GM12878 (cell line): ENCODE measurements at regions of chr1 and their contacts with region 1.

Region 1: GRCh38 chr1:18902523-18903290 is at the start of gene ALDH4A1:
- DNase-seq: peak; percentile 90
- ATAC-seq: peak; percentile 99
- H3K4me3 ChIP-seq: peak within 1 kb of the TSS; percentile 86
- H3K27ac ChIP-seq: peak within 1 kb of the TSS; percentile 91
- H3K4me1 ChIP-seq: peaks cover 10% of the 10 kb centered on the region; the same call in 1 of the 2 replicates
- H3K27me3 ChIP-seq: no peaks in the 10 kb centered on the region
- CTCF ChIP-seq: 0 out of 6 replicates have a peak, but pooled peaks of 1 of the 3 experiments have one; percentile 4
- EP300 ChIP-seq: no peak
- POLR2A ChIP-seq: peak; percentile 79
- RAD21 ChIP-seq: no peak
- polyA plus RNA-seq, gene ALDH4A1: 0.06 to 0.53 TPM

Region 2: GRCh38 chr1:18794051-18794450 is 108.7 kb before region 1 on chr1:
- CTCF ChIA-PET with region 1: no interaction called
- POLR2A ChIA-PET with region 1: no interaction called
- RAD21 ChIA-PET with region 1: no interaction called
- SMC1A ChIA-PET with region 1: no interaction called
- in situ Hi-C with region 1: no loop called
- intact Hi-C with region 1: no loop called
- DNase-seq: no peak
- ATAC-seq: no peak
- H3K4me3 ChIP-seq: no peak overlapping the region
- H3K27ac ChIP-seq: no peak overlapping the region
- H3K4me1 ChIP-seq: no peaks in the 10 kb centered on the region
- H3K27me3 ChIP-seq: peaks cover 0 to 4% of the 10 kb centered on the region in 2 experiments; a peak in 3 of 4 replicates
- CTCF ChIP-seq: no peak
- EP300 ChIP-seq: no peak
- POLR2A ChIP-seq: no peak
- RAD21 ChIP-seq: no peak

Region 3: GRCh38 chr1:18926315-18927081 is 23.8 kb after region 1 on chr1:
- CTCF ChIA-PET with region 1: interaction called, 29 read pairs
- POLR2A ChIA-PET with region 1: interaction called, 7 read pairs
- RAD21 ChIA-PET with region 1: interaction called, 10 read pairs
- SMC1A ChIA-PET with region 1: interaction called, 4 read pairs
- in situ Hi-C with region 1: no loop called
- intact Hi-C with region 1: no loop called
- DNase-seq: peak; percentile 80
- ATAC-seq: peak; percentile 90
- H3K4me3 ChIP-seq: peak overlapping the region; percentile 68
- H3K27ac ChIP-seq: peak overlapping the region; percentile 98
- H3K4me1 ChIP-seq: peaks cover 55% of the 10 kb centered on the region
- H3K27me3 ChIP-seq: no peaks in the 10 kb centered on the region
- CTCF ChIP-seq: peak in 1 of 3 experiments; percentile 5; a peak in 1 of 6 replicates
- EP300 ChIP-seq: 0 out of 4 replicates have a peak, but pooled peaks of 1 of the 2 experiments have one; percentile 37
- POLR2A ChIP-seq: peak; percentile 68
- RAD21 ChIP-seq: peak; percentile 28; the same call in 1 of the 2 replicates

Region 4: GRCh38 chr1:18956369-18957135 is 53.8 kb after region 1 on chr1 and contains the start of gene IFFO2:
- CTCF ChIA-PET with region 1: interaction called, 86 read pairs
- POLR2A ChIA-PET with region 1: interaction called, 6 read pairs
- RAD21 ChIA-PET with region 1: interaction called, 11 read pairs
- SMC1A ChIA-PET with region 1: interaction called, 3 read pairs
- in situ Hi-C with region 1: no loop called
- intact Hi-C with region 1: no loop called
- DNase-seq: peak; percentile 34
- ATAC-seq: peak; percentile 80
- H3K4me3 ChIP-seq: peak within 1 kb of the TSS; percentile 70
- H3K27ac ChIP-seq: peak within 1 kb of the TSS; percentile 8; the same call in 1 of the 2 replicates
- H3K4me1 ChIP-seq: peaks cover 41% of the 10 kb centered on the region
- H3K27me3 ChIP-seq: peaks cover 1 to 3% of the 10 kb centered on the region in 2 experiments; a peak in 3 of 4 replicates
- CTCF ChIP-seq: no peak
- EP300 ChIP-seq: no peak
- POLR2A ChIP-seq: peak; percentile 81
- RAD21 ChIP-seq: no peak
- polyA plus RNA-seq, gene IFFO2: 1.2 to 1.9 TPM

Region 5: GRCh38 chr1:19087737-19088594 is 185.3 kb after region 1 on chr1:
- CTCF ChIA-PET with region 1: interaction called, 22 read pairs
- POLR2A ChIA-PET with region 1: no interaction called
- RAD21 ChIA-PET with region 1: interaction called, 6 read pairs
- SMC1A ChIA-PET with region 1: interaction called, 6 read pairs
- in situ Hi-C with region 1: no loop called
- intact Hi-C with region 1: loop called (anchors 2 kb)
- DNase-seq: peak; percentile 19
- ATAC-seq: peak; percentile 90
- H3K4me3 ChIP-seq: 0 out of 2 replicates have a peak overlapping the region, but pooled peaks have one; percentile 6
- H3K27ac ChIP-seq: peak overlapping the region; percentile 75
- H3K4me1 ChIP-seq: peaks cover 26% of the 10 kb centered on the region
- H3K27me3 ChIP-seq: no peaks in the 10 kb centered on the region
- CTCF ChIP-seq: no peak
- EP300 ChIP-seq: no peak
- POLR2A ChIP-seq: peak; percentile 60
- RAD21 ChIP-seq: no peak

Region 6: GRCh38 chr1:19101244-19101643 is 198.5 kb after region 1 on chr1:
- CTCF ChIA-PET with region 1: interaction called, 18 read pairs
- POLR2A ChIA-PET with region 1: no interaction called
- RAD21 ChIA-PET with region 1: no interaction called
- SMC1A ChIA-PET with region 1: interaction called, 4 read pairs
- in situ Hi-C with region 1: loop called (anchors 5 kb)
- intact Hi-C with region 1: no loop called
- DNase-seq: no peak
- ATAC-seq: no peak
- H3K4me3 ChIP-seq: no peak overlapping the region
- H3K27ac ChIP-seq: no peak overlapping the region
- H3K4me1 ChIP-seq: no peaks in the 10 kb centered on the region
- H3K27me3 ChIP-seq: no peaks in the 10 kb centered on the region
- CTCF ChIP-seq: no peak
- EP300 ChIP-seq: no peak
- POLR2A ChIP-seq: no peak
- RAD21 ChIP-seq: no peak

Region 7: DNA sequence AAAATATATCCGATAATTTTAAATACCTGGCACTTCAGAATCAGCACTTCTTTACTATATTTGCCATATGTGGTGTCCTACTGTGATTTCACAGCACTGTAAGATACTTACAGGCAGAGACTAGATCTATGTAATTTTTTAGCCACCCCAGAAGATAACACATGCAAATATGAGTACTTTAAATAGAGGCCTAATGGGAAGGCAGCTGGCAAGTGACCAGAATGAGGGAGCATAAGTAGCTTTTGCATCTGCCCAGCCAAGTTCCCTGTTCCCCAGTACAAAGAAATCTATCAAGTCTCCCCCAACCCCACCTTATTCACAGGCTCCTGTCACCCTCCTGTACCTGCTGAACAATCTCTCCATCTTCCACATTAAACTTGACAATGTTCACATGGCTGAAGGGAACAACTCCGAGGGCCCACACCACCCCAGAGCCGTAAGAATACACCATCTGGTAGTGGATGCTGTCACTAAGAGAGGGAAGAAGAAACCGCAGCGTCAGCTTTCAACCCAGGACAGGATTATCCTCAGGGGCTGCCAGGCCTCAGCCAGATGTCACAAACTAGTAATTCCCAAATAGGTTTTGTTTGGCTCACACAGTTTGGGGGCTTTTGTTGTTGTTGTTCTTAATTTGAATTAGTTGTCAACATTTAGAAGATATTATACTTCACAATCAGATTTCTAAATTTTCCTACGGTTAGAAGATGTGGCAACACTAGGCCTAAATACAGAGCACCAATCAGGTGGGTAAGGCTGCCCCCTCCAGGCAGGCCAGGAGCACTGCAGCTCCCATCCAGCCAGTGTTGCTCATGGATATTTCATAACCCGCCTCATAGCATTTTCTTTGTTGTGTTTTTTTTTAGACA is 338.2 kb after region 1 on chr1:
- CTCF ChIA-PET with region 1: interaction called, 20 read pairs
- POLR2A ChIA-PET with region 1: no interaction called
- RAD21 ChIA-PET with region 1: no interaction called
- SMC1A ChIA-PET with region 1: interaction called, 3 read pairs
- in situ Hi-C with region 1: no loop called
- intact Hi-C with region 1: no loop called
- DNase-seq: no peak
- ATAC-seq: peak; percentile 97
- H3K4me3 ChIP-seq: no peak overlapping the region
- H3K27ac ChIP-seq: no peak overlapping the region
- H3K4me1 ChIP-seq: no peaks in the 10 kb centered on the region
- H3K27me3 ChIP-seq: no peaks in the 10 kb centered on the region
- CTCF ChIP-seq: peak; percentile 89 to 96 (median 94)
- EP300 ChIP-seq: no peak
- POLR2A ChIP-seq: no peak
- RAD21 ChIP-seq: peak; percentile 73